ENCODE measurements at regions of chr22 and their contacts with region 1.

Region 1: GRCh38 chr22:31630331-31631329 is 31.4 kb downstream of the PISD start:
- DNase-seq: no peak
- ATAC-seq: peak; percentile 83
- H3K4me3 ChIP-seq: peak overlapping the region; percentile 76 to 88
- H3K27ac ChIP-seq: peak overlapping the region; percentile 70
- H3K4me1 ChIP-seq: peaks cover 26 to 52% of the 10 kb centered on the region in 2 experiments
- H3K27me3 ChIP-seq: no peaks in the 10 kb centered on the region
- CTCF ChIP-seq: no peak
- POLR2A ChIP-seq: peak; percentile 61
- RAD21 ChIP-seq: no peak

Region 2: DNA sequence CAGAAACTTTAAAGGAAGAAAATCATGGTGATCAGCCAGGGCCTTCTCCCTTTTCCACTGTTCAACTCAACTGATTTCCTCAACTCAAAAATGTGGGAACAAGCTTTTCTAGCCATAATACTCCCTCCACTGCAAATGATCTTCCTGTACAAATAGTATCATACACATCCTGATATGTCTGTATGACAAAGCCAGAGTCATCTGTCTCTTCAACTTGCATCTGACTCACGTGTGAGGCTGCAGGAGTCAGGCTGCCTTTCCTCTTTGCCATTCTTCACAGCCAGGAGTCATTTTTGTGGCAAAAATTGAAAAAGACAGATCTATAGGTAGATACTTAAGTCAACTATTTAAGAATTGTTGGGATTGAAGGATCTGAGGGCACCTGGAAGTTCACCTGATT is 297.7 kb before region 1 on chr22:
- CTCF ChIA-PET with region 1: no interaction called
- POLR2A ChIA-PET with region 1: no interaction called
- RAD21 ChIA-PET with region 1: no interaction called
- intact Hi-C with region 1: no loop called
- DNase-seq: no peak
- ATAC-seq: no peak
- H3K4me3 ChIP-seq: no peak overlapping the region
- H3K27ac ChIP-seq: no peak overlapping the region
- H3K4me1 ChIP-seq: peaks cover 5 to 10% of the 10 kb centered on the region in 2 experiments; a peak in 3 of 4 replicates
- H3K27me3 ChIP-seq: no peaks in the 10 kb centered on the region
- CTCF ChIP-seq: no peak
- POLR2A ChIP-seq: no peak
- RAD21 ChIP-seq: no peak

Region 3: DNA sequence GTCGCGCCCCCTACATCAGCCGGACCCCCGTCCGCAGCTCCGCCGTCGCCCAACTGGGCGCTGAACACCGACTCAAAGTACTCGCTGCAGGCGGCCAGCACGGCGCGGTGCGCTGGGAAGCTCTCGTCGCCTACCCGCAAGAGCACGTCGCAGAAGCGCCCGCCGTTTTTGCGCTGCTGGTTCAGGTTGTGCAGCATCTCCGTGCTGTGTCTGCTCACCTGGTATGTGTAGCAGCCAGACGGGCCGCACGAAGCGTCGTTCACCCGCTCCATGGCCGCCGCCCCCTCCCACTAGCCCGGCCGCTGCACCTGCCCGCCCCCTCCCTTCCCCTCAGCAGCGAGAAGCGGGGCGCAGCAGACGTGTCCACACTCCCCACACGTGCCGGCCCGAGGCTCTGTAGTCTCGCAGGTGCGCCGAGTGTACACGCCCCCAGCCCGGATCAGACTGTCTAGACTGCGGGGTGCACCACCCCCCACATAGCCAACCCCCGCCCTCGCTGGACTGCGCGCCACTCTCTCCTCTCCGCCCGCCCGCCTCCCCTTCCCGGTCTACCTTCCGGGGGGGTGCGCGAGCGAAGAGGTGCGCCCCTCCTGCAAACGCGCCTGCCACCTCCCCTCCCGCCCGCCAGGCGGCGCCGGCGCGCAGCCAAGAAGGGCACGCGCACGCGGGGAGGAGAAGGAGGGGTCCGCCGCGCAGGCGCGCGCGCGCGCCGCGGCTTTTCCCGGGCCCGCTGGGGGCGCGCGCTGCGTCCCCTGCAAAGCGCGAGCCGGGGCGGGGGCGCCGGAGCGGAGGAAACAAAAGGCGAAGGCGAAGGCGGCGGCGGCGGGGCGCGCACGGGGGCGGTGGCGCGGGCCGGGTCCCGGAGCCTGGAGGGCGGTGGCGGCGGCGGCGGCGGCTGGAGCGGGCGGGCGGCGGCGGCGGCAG is 285.0 kb before region 1 on chr22:
- CTCF ChIA-PET with region 1: no interaction called
- POLR2A ChIA-PET with region 1: no interaction called
- RAD21 ChIA-PET with region 1: no interaction called
- intact Hi-C with region 1: loop called (anchors 10 kb)
- DNase-seq: peak; percentile 68
- ATAC-seq: peak; percentile 61
- H3K4me3 ChIP-seq: peak overlapping the region; percentile 74 to 80
- H3K27ac ChIP-seq: peak overlapping the region; percentile 80
- H3K4me1 ChIP-seq: peaks cover 30 to 47% of the 10 kb centered on the region in 2 experiments
- H3K27me3 ChIP-seq: no peaks in the 10 kb centered on the region
- CTCF ChIP-seq: peak; percentile 49 to 82 (median 71); a peak in 5 of 6 replicates
- POLR2A ChIP-seq: no peak
- RAD21 ChIP-seq: peak; percentile 53

Region 4: GRCh38 chr22:31451709-31452571 is 178.7 kb before region 1 on chr22:
- CTCF ChIA-PET with region 1: interaction called, 11 read pairs
- POLR2A ChIA-PET with region 1: interaction called, 3 read pairs
- RAD21 ChIA-PET with region 1: no interaction called
- intact Hi-C with region 1: loop called (anchors 2 kb)
- DNase-seq: peak; percentile 21
- ATAC-seq: peak; percentile 95
- H3K4me3 ChIP-seq: no peak overlapping the region
- H3K27ac ChIP-seq: no peak overlapping the region
- H3K4me1 ChIP-seq: no peaks in the 10 kb centered on the region
- H3K27me3 ChIP-seq: no peaks in the 10 kb centered on the region
- CTCF ChIP-seq: peak; percentile 48 to 75 (median 72); a peak in 5 of 6 replicates
- POLR2A ChIP-seq: no peak
- RAD21 ChIP-seq: peak; percentile 43; the same call in 1 of the 2 replicates

Region 5: GRCh38 chr22:31489604-31490495 is 140.8 kb before region 1 on chr22 and contains the start of gene EIF4ENIF1:
- CTCF ChIA-PET with region 1: no interaction called
- POLR2A ChIA-PET with region 1: no interaction called
- RAD21 ChIA-PET with region 1: no interaction called
- intact Hi-C with region 1: loop called (anchors 5 kb)
- DNase-seq: peak; percentile 46
- ATAC-seq: peak; percentile 83
- H3K4me3 ChIP-seq: peak within 1 kb of the TSS; percentile 66 to 88
- H3K27ac ChIP-seq: peak within 1 kb of the TSS; percentile 88
- H3K4me1 ChIP-seq: peaks cover 17 to 18% of the 10 kb centered on the region in 2 experiments
- H3K27me3 ChIP-seq: no peaks in the 10 kb centered on the region
- CTCF ChIP-seq: no peak
- POLR2A ChIP-seq: peak; percentile 33
- RAD21 ChIP-seq: no peak
- total RNA-seq, gene EIF4ENIF1: 24.2 TPM

Region 6: GRCh38 chr22:31561238-31561887 is 69.3 kb before region 1 on chr22:
- CTCF ChIA-PET with region 1: interaction called, 11 read pairs
- POLR2A ChIA-PET with region 1: interaction called, 3 read pairs
- RAD21 ChIA-PET with region 1: no interaction called
- intact Hi-C with region 1: loop called (anchors 1 kb)
- DNase-seq: peak; percentile 68
- ATAC-seq: peak; percentile 100
- H3K4me3 ChIP-seq: no peak overlapping the region
- H3K27ac ChIP-seq: no peak overlapping the region
- H3K4me1 ChIP-seq: peaks cover 3 to 10% of the 10 kb centered on the region in 2 experiments; a peak in 3 of 4 replicates
- H3K27me3 ChIP-seq: no peaks in the 10 kb centered on the region
- CTCF ChIP-seq: peak; percentile 72 to 94 (median 79)
- POLR2A ChIP-seq: no peak
- RAD21 ChIP-seq: peak; percentile 78